ENCODE measurements at regions of chr2 and their contacts with region 1.

Region 1: GRCh38 chr2:197556456-197556855 is 40.6 kb downstream of the MOB4 start:
- DNase-seq: no peak
- H3K4me3 ChIP-seq: no peak overlapping the region
- CTCF ChIP-seq: no peak

Region 2: GRCh38 chr2:197191177-197191939 is 365.1 kb before region 1 on chr2:
- in situ Hi-C with region 1: no loop called
- DNase-seq: peak; percentile 27
- H3K4me3 ChIP-seq: no peak overlapping the region
- CTCF ChIP-seq: peak; percentile 46

Region 3: DNA sequence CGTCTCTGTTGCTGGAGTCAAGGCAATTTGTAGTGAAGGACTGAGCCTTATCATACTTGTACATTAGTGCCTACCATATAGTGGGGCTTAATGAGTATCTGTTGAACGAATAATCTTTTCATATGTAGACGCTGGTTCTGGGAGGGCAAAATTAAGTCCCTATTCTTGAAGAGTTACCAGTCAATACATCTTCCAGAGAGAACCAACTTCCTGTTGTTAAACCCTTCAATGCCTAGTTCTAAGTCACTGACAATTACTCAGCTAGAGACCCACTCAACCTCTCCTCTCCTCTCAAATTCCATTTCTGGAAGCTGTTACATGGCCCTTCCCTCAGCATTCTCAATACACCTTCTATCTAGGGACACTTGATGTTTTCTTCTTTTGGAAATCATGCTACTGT is 41.7 kb before region 1 on chr2:
- in situ Hi-C with region 1: loop called (anchors 5 kb)
- DNase-seq: no peak
- H3K4me3 ChIP-seq: no peak overlapping the region
- CTCF ChIP-seq: no peak

Region 4: DNA sequence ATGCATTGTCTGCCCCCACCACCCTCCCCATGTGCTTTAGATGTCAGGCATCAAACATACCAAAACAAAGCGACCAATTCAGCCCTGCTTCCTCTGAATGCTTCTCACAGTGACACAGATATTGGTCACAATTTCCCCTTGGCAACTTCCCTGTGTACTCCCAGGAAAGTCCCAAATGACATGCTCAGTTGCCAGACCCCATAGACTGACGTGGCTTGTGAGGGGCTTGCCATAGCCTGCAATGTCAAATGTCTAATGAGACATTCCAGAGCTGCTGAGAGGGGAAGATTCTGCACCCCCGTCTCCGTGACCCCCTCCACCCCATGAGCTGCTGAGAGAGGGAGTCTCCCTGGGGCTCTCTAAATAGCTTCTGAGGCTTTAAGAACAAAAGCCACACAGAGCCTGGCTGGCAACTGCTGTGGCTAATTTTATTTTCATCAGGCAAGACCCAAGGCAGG is 71.6 kb after region 1 on chr2:
- in situ Hi-C with region 1: no loop called
- DNase-seq: no peak
- H3K4me3 ChIP-seq: no peak overlapping the region
- CTCF ChIP-seq: no peak

Measured in astrocyte of the cerebellum (primary cell).